ENCODE measurements at regions of chr13 and their contacts with region 1.

Region 1: DNA sequence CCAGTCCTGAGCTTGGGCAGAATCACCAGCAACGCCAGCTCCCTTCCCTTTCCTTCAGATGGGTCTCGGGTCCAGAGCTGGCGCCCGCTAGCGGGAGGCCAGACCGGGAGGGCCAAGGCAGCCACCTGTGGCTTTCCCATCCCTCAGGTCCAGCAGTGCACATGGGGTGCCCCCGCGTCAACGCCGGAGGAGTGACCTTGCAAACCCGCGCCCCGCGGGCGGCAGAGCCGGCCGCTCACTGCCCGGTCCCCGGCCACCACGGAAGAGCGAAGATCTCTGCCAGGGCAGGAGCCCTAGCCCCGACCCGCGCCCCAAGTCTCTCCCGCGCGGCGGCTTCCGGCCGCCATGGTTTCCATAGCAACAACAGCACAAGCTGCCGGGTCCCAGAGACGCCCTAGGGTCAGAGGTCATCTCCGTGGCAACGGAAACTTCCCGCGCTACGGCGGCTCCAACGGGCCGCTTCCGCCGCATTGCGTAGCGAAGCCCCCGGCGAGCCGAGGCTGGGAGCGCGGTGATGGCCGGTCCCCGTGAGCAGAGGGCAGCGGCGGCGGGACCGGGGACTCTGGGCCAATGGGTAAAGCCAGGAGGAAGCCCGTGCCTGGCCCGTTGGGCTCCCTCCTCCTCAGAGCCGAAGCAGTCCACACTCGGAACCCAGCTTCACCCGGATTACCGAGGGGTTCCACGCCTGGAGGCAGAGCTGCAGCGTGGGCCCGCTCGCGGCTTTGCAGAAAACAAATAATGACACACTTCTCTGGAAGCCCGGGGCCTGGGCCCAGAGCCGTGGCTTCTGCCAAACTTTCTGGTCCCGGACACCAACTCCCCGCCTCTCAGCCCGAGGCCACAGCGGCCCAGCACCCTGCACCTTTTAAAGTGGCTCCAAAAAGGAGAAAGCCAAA is 7.4 kb downstream of the FGF14 start:
- DNase-seq: peak; percentile 91 to 98 (median 95)
- ATAC-seq: peak; percentile 94
- H3K4me3 ChIP-seq: peak overlapping the region; percentile 96
- H3K4me3 Mint-ChIP-seq: peak overlapping the region; percentile 85 to 93 (median 90)
- H3K27ac ChIP-seq: peak overlapping the region; percentile 78
- H3K27ac Mint-ChIP-seq: peak overlapping the region in 8 of 9 donors; percentile 82 to 94 (median 88)
- H3K4me1 ChIP-seq: peaks cover 0 to 12% of the 10 kb centered on the region in 2 donors
- H3K4me1 Mint-ChIP-seq: peaks cover 6 to 25% (median 20%) of the 10 kb centered on the region in 7 donors
- H3K27me3 ChIP-seq: no peaks in the 10 kb centered on the region
- H3K27me3 Mint-ChIP-seq: peaks cover 13 to 41% (median 22%) of the 10 kb centered on the region in 5 donors

Region 2: GRCh38 chr13:101626925-101627555 is 767.4 kb before region 1 on chr13:
- CTCF ChIA-PET with region 1: no interaction called
- POLR2A ChIA-PET with region 1: no interaction called
- intact Hi-C with region 1: loop called (anchors 5 to 10 kb)
- DNase-seq: peak in 6 of 9 donors; percentile 24 to 62 (median 48)
- ATAC-seq: peak; percentile 73
- H3K4me3 ChIP-seq: peak overlapping the region; percentile 40
- H3K4me3 Mint-ChIP-seq: peak overlapping the region; percentile 63 to 92 (median 78)
- H3K27ac ChIP-seq: peak overlapping the region; percentile 67
- H3K27ac Mint-ChIP-seq: peak overlapping the region; percentile 15 to 89 (median 76)
- H3K4me1 ChIP-seq: peaks cover 29 to 33% of the 10 kb centered on the region in 2 donors
- H3K4me1 Mint-ChIP-seq: peaks cover 9 to 49% (median 48%) of the 10 kb centered on the region in 7 donors
- H3K27me3 ChIP-seq: no peaks in the 10 kb centered on the region
- H3K27me3 Mint-ChIP-seq: peaks cover 0 to 27% (median 0%) of the 10 kb centered on the region in 5 donors

Region 3: DNA sequence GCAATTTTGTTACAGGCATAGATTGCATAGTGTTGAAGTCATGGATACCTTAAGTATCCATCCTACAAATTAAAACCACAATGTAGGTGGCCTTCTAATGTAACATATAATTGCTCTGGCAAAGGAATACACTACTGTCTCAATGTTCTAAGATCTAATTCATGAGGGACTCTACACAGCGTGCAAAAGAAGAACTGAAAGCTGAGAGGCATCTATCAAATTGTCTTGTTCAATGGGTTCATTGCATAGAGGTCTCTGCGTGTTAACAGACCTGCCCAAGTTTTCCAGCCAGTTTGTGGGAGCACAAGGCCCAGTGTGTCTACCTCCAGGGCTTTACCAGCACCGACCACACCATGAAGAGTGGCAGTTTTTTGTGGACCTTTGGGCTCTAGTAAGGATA is 490.5 kb before region 1 on chr13:
- CTCF ChIA-PET with region 1: no interaction called
- POLR2A ChIA-PET with region 1: no interaction called
- intact Hi-C with region 1: no loop called
- DNase-seq: no peak
- ATAC-seq: no peak
- H3K4me3 ChIP-seq: no peak overlapping the region
- H3K4me3 Mint-ChIP-seq: no peak overlapping the region
- H3K27ac ChIP-seq: no peak overlapping the region
- H3K27ac Mint-ChIP-seq: no peak overlapping the region
- H3K4me1 ChIP-seq: no peaks in the 10 kb centered on the region
- H3K4me1 Mint-ChIP-seq: no peaks in the 10 kb centered on the region
- H3K27me3 ChIP-seq: no peaks in the 10 kb centered on the region
- H3K27me3 Mint-ChIP-seq: peaks cover 0 to 6% (median 5%) of the 10 kb centered on the region in 5 donors

Region 4: DNA sequence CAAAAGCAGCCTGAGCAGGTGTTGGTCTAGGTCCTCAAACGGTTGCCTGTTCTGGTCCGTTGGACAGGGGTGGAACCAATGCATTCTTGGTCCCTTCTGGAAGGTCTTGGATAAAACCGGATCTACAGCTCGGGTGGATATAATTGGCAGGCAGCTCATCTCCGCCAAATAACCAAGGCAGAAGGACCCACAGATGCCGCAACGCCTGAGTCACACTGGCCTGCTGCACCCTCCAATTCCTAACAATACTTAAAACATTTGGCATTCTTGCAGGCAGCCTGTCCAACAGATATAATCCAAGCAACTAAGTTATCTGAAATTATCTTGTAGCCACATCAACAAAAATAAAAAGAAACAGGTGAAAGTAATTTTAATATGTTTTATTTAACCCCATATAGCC is 66.4 kb after region 1 on chr13:
- CTCF ChIA-PET with region 1: no interaction called
- POLR2A ChIA-PET with region 1: no interaction called
- intact Hi-C with region 1: loop called in 1 of 2 experiments (anchors 5 kb)
- DNase-seq: no peak
- ATAC-seq: no peak
- H3K4me3 ChIP-seq: no peak overlapping the region
- H3K4me3 Mint-ChIP-seq: no peak overlapping the region
- H3K27ac ChIP-seq: no peak overlapping the region
- H3K27ac Mint-ChIP-seq: no peak overlapping the region
- H3K4me1 ChIP-seq: no peaks in the 10 kb centered on the region
- H3K4me1 Mint-ChIP-seq: peaks cover 0 to 7% (median 5%) of the 10 kb centered on the region in 7 donors
- H3K27me3 ChIP-seq: no peaks in the 10 kb centered on the region
- H3K27me3 Mint-ChIP-seq: peaks cover 2 to 30% (median 17%) of the 10 kb centered on the region in 5 donors

Region 5: DNA sequence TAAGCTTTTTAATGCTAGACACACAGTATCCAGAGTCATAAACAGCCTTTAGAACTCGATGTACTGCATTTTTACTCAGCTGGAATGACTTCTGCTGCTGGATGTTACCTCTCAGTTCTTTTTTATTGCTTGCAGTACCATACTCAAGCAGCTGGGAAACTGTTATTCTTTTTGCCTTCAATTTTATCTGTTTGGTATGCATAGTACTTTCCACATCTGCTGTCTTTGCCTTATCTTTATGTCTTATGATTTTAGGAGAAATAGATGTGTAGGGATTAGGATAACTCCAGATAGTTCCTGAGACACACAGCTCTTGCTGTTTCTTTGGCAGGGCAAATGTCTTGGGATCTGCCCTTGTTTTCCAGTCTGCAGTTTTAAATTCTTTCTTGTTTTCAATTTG is 347.7 kb after region 1 on chr13:
- CTCF ChIA-PET with region 1: no interaction called
- POLR2A ChIA-PET with region 1: no interaction called
- intact Hi-C with region 1: no loop called
- DNase-seq: no peak
- ATAC-seq: no peak
- H3K4me3 ChIP-seq: no peak overlapping the region
- H3K4me3 Mint-ChIP-seq: no peak overlapping the region
- H3K27ac ChIP-seq: no peak overlapping the region
- H3K27ac Mint-ChIP-seq: no peak overlapping the region
- H3K4me1 ChIP-seq: no peaks in the 10 kb centered on the region
- H3K4me1 Mint-ChIP-seq: peaks cover 0 to 28% (median 0%) of the 10 kb centered on the region in 7 donors
- H3K27me3 ChIP-seq: no peaks in the 10 kb centered on the region
- H3K27me3 Mint-ChIP-seq: peaks cover 40 to 65% (median 53%) of the 10 kb centered on the region in 5 donors

Region 6: GRCh38 chr13:102773441-102774215 is 379.2 kb after region 1 on chr13 and contains the start of gene TEX30:
- CTCF ChIA-PET with region 1: no interaction called
- POLR2A ChIA-PET with region 1: interaction called, 3 read pairs
- intact Hi-C with region 1: loop called (anchors 2 to 5 kb)
- DNase-seq: peak; percentile 78 to 95 (median 91)
- ATAC-seq: peak; percentile 98
- H3K4me3 ChIP-seq: peak within 1 kb of the TSS; percentile 89
- H3K4me3 Mint-ChIP-seq: peak within 1 kb of the TSS; percentile 87 to 97 (median 94)
- H3K27ac ChIP-seq: peak within 1 kb of the TSS; percentile 79
- H3K27ac Mint-ChIP-seq: peak within 1 kb of the TSS; percentile 87 to 97 (median 94)
- H3K4me1 ChIP-seq: peaks cover 2 to 7% of the 10 kb centered on the region in 2 donors
- H3K4me1 Mint-ChIP-seq: peaks cover 15 to 56% (median 46%) of the 10 kb centered on the region in 7 donors
- H3K27me3 ChIP-seq: no peaks in the 10 kb centered on the region
- H3K27me3 Mint-ChIP-seq: no peaks in the 10 kb centered on the region
- total RNA-seq, gene TEX30: 3.7 to 30.8 (median 8.3) TPM

Region 7: GRCh38 chr13:103218253-103218652 is 823.8 kb after region 1 on chr13:
- CTCF ChIA-PET with region 1: no interaction called
- POLR2A ChIA-PET with region 1: no interaction called
- intact Hi-C with region 1: no loop called
- DNase-seq: no peak
- ATAC-seq: no peak
- H3K4me3 ChIP-seq: no peak overlapping the region
- H3K4me3 Mint-ChIP-seq: no peak overlapping the region
- H3K27ac ChIP-seq: no peak overlapping the region
- H3K27ac Mint-ChIP-seq: no peak overlapping the region
- H3K4me1 ChIP-seq: no peaks in the 10 kb centered on the region
- H3K4me1 Mint-ChIP-seq: no peaks in the 10 kb centered on the region
- H3K27me3 ChIP-seq: no peaks in the 10 kb centered on the region
- H3K27me3 Mint-ChIP-seq: peaks cover 0 to 12% (median 0%) of the 10 kb centered on the region in 5 donors